HEK293 (cell line): ENCODE measurements at regions of chr9 and their contacts with region 1.

Region 1: DNA sequence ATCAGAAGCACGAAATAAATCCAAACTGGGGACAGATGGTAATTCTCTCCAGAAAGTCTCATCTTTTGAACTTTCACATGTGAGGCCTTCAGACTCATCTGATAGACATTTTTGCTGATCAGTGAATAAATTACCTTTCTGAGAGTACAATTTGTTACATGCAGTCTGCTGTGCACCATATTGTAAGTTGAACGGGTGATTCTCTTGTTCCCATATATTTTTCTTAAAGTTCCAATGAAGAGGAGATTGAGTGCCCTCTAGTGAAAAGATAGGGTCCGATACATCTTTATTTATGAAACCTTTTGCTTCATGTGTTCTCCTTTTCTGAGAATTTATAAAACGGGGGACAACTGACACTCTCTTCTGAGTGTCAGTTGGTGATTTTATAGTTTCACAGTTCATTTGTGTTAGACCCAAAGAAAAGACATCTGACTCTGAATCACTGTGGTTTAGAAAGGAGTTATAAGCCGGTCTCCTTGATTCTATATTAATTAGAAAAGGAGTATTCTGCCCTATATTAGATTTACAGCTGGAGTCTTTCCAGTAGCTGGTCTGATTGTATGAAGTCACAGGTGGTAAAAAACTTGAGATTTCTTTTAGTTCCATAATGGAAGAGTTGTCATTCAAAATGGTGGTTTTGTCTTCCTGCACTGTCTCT is 30.4 kb downstream of the GNG10 start:
- H3K4me3 ChIP-seq: no peak overlapping the region
- H3K27ac ChIP-seq: no peak overlapping the region
- H3K4me1 ChIP-seq: no peaks in the 10 kb centered on the region
- CTCF ChIP-seq: no peak

Region 2: DNA sequence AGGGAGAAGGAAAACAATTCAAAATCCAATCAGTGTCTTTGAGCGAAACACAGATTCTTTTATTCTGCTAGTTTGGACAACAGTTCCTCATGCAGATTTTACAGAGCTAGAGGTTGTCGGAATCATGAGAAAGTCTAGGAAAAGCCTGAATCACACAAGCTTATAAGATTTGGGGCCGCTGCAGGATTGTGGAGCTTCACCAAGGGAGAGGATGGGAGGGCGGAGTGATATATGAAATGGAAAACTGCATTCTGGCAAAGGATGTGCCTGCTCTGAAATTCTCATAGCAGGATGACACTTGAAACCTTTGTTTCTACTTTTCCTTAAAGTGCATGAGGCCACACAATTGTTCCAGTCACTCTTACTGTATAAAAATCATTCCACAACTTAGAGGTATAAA is 496.0 kb before region 1 on chr9:
- CTCF ChIA-PET with region 1: no interaction called
- POLR2A ChIA-PET with region 1: no interaction called
- H3K4me3 ChIP-seq: no peak overlapping the region
- H3K27ac ChIP-seq: no peak overlapping the region
- H3K4me1 ChIP-seq: no peaks in the 10 kb centered on the region
- CTCF ChIP-seq: no peak

Region 3: DNA sequence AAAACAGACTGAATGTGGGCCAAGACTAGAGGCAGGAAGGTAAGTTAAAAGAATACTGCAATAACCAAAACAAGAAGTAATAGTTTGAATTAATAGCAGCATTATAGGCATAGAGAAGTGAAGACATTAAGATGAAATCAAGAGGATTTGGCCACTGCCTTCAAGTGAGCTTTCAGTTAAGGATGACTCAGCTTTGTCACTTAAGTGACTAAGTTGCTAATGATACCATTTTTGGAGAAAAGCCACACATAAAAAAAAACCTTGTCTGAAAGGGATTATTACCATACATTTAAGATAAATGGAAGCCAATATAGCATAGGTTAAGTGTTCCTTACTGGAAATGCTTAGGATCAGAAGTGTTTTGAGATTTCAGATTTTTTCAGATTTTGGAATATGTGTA is 264.6 kb before region 1 on chr9:
- CTCF ChIA-PET with region 1: no interaction called
- POLR2A ChIA-PET with region 1: no interaction called
- H3K4me3 ChIP-seq: no peak overlapping the region
- H3K27ac ChIP-seq: no peak overlapping the region
- H3K4me1 ChIP-seq: no peaks in the 10 kb centered on the region
- CTCF ChIP-seq: no peak

Region 4: GRCh38 chr9:111450124-111450523 is 241.7 kb before region 1 on chr9:
- CTCF ChIA-PET with region 1: no interaction called
- POLR2A ChIA-PET with region 1: no interaction called
- H3K4me3 ChIP-seq: no peak overlapping the region
- H3K27ac ChIP-seq: no peak overlapping the region
- H3K4me1 ChIP-seq: 0 out of 2 replicates have a peak, but pooled peaks cover 2% of the 10 kb centered on the region
- CTCF ChIP-seq: no peak

Region 5: GRCh38 chr9:111678293-111678692 is 13.5 kb before region 1 on chr9:
- CTCF ChIA-PET with region 1: interaction called, 10 read pairs
- POLR2A ChIA-PET with region 1: no interaction called
- H3K4me3 ChIP-seq: no peak overlapping the region
- H3K27ac ChIP-seq: no peak overlapping the region
- H3K4me1 ChIP-seq: no peaks in the 10 kb centered on the region
- CTCF ChIP-seq: no peak

Region 6: GRCh38 chr9:111896353-111896958 is 204.7 kb after region 1 on chr9 and contains the start of gene UGCG:
- CTCF ChIA-PET with region 1: no interaction called
- POLR2A ChIA-PET with region 1: no interaction called
- H3K4me3 ChIP-seq: peak within 1 kb of the TSS; percentile 80
- H3K27ac ChIP-seq: peak within 1 kb of the TSS; percentile 78
- H3K4me1 ChIP-seq: no peaks in the 10 kb centered on the region; the same call in 1 of the 2 replicates
- CTCF ChIP-seq: no peak